Activated B cell treated with CpG ODN at 0.5 μM for 24 hours (primary cell): ENCODE measurements at regions of chr12 and their contacts with region 1.

Region 1: DNA sequence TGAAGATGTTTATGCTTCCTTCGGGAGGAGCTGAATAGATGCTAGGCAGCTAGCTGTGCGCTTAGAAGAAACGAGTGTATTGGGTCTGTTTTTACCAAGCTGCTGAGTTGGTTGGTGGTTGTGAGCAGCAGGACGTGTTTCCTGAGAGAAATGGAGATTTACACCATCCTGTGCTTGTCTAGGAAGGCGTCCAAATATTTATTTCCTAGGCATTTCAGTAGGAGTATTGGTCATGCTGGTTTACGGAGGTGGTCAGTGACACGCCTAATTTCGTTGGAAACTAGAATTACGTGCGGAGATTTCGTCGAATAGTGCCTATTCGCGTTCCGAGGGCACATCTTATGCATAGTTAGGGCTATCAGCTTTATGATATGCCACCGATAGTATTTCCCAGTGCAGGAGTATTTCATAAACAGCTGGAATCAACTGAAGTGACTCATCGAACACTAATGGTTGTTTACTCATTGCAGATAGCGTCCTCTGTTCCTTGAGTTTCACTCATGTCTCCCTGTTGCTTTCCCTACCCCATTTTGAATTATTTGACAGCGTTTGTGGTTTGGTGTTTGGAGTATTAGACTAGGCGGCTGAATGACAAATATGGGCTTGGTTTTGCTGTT is 780 bp downstream of the TBC1D15 start:
- DNase-seq: no peak
- ATAC-seq: peak; percentile 8
- H3K4me3 Mint-ChIP-seq: peak overlapping the region; percentile 94
- H3K27ac Mint-ChIP-seq: peak overlapping the region; percentile 96
- H3K4me1 Mint-ChIP-seq: peaks cover 34% of the 10 kb centered on the region
- H3K27me3 Mint-ChIP-seq: peaks cover 2% of the 10 kb centered on the region
- CTCF ChIP-seq: no peak

Region 2: GRCh38 chr12:71415336-71416231 is 424.8 kb before region 1 on chr12:
- CTCF ChIA-PET with region 1: no interaction called
- POLR2A ChIA-PET with region 1: no interaction called
- intact Hi-C with region 1: loop called (anchors 2 kb)
- DNase-seq: no peak
- ATAC-seq: peak; percentile 54
- H3K4me3 Mint-ChIP-seq: no peak overlapping the region
- H3K27ac Mint-ChIP-seq: no peak overlapping the region
- H3K4me1 Mint-ChIP-seq: no peaks in the 10 kb centered on the region
- H3K27me3 Mint-ChIP-seq: no peaks in the 10 kb centered on the region
- CTCF ChIP-seq: no peak

Region 3: GRCh38 chr12:71636704-71637115 is 203.6 kb before region 1 on chr12:
- CTCF ChIA-PET with region 1: no interaction called
- POLR2A ChIA-PET with region 1: no interaction called
- intact Hi-C with region 1: loop called (anchors 10 kb)
- DNase-seq: no peak
- ATAC-seq: peak; percentile 57
- H3K4me3 Mint-ChIP-seq: no peak overlapping the region
- H3K27ac Mint-ChIP-seq: peak overlapping the region; percentile 19
- H3K4me1 Mint-ChIP-seq: peaks cover 5% of the 10 kb centered on the region
- H3K27me3 Mint-ChIP-seq: no peaks in the 10 kb centered on the region
- CTCF ChIP-seq: peak; percentile 66

Region 4: DNA sequence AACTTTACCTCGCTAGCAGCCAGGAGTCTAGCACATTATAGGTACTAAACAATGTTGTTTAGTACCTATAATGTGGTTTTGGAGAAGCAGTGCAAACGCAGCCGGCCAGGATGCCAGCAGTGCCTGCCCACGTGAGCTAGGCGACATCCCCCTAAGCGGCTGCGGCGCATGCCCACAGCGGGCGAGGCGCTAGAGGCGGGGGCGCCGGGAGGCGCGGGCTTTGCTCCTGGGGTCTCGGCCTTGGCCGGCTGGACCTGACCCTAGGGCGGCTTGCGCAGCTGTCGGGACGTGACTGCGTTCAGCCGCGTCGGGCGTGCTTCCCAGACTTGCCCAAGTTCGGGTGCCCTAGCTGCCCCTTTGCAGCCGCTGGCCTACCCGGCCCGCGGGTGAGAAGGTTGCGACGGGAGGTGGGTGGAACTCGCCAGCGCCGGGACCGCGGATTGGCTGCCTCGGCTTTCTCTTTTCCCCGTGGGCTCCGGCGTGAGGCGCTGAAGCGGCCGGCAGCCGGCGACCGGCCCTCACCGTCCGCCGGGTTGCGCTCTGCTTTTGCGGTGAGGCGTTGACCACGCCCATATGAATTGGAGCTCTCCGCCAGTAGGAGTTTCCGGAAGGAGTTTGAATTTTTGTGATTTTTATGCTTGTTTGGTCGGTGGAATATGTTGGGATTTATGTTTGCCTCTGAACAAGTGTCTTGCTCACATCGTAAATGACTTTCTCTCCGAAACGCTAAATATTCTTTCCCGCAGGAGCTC is 154.2 kb before region 1 on chr12 and contains the start of gene TMEM19:
- CTCF ChIA-PET with region 1: no interaction called
- POLR2A ChIA-PET with region 1: interaction called, 7 read pairs
- intact Hi-C with region 1: loop called (anchors 1 kb)
- DNase-seq: peak; percentile 87
- ATAC-seq: peak; percentile 87
- H3K4me3 Mint-ChIP-seq: peak within 1 kb of the TSS; percentile 93
- H3K27ac Mint-ChIP-seq: peak within 1 kb of the TSS; percentile 97
- H3K4me1 Mint-ChIP-seq: peaks cover 56% of the 10 kb centered on the region
- H3K27me3 Mint-ChIP-seq: no peaks in the 10 kb centered on the region
- CTCF ChIP-seq: no peak
- total RNA-seq, gene TMEM19: 42.6 and 46.7 TPM in 2 replicates

Region 5: DNA sequence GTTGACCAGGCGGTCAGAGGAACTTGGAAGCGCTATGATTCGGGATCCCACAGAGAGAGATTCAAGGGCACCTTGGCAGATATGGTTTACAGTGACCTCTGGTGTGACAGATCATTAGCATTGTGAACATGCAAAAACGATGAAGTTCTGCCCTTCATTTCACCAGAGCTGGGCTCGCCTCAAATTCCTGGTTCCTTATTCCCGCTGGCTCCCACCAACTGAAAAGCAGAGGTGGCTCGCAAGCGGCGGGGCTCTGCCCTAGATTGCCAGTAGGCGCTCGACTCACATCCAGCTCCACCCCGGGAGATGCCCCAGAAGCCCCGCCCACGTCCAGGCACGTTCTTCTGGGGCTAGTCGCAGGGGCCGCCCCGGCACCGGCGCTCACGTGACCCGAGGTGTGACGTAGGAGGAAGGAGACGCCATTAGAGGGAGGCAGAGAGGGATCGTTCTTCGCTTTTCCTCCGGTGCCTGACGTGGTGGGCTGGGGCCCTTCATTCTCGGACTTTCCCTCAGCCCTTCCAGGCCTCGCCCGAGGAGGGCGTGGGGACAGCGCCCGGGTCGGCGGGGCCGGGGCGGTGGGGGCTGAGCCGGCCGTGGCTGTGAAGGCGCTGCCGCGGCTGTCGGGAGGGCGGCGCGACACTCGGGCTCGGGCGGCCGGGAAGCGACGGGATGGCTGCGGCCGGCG is 85.7 kb before region 1 on chr12 and contains the start of gene RAB21:
- CTCF ChIA-PET with region 1: interaction called, 3 read pairs
- POLR2A ChIA-PET with region 1: interaction called, 17 read pairs
- intact Hi-C with region 1: loop called (anchors 1 kb)
- DNase-seq: peak; percentile 95
- ATAC-seq: peak; percentile 84
- H3K4me3 Mint-ChIP-seq: peak within 1 kb of the TSS; percentile 96
- H3K27ac Mint-ChIP-seq: peak within 1 kb of the TSS; percentile 97
- H3K4me1 Mint-ChIP-seq: peaks cover 43% of the 10 kb centered on the region
- H3K27me3 Mint-ChIP-seq: no peaks in the 10 kb centered on the region
- CTCF ChIP-seq: no peak
- total RNA-seq, gene RAB21: 112 and 121 TPM in 2 replicates

Region 6: DNA sequence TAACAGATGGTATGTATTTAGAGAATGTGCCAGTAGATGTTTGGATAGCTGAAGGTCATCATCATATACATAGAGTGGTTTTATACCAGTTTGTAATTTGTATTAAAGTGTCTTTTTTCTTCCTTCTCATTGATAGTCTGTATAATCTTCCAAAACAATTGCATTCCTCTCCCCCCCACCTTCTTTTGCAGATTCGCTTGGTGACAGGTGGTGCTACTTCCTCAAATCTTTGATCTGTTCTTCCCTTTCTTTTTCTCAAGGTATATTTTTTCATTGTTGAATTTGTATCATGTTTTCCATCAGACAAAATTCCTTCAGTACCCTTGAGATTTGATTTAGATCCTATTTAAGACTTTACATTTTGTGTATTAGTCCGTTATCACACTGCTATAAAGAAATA is 14.3 kb after region 1 on chr12:
- CTCF ChIA-PET with region 1: interaction called, 3 read pairs
- POLR2A ChIA-PET with region 1: no interaction called
- intact Hi-C with region 1: loop called (anchors 1 kb)
- DNase-seq: no peak
- ATAC-seq: no peak
- H3K4me3 Mint-ChIP-seq: no peak overlapping the region
- H3K27ac Mint-ChIP-seq: peak overlapping the region; percentile 72
- H3K4me1 Mint-ChIP-seq: peaks cover 34% of the 10 kb centered on the region
- H3K27me3 Mint-ChIP-seq: no peaks in the 10 kb centered on the region
- CTCF ChIP-seq: no peak

Region 7: GRCh38 chr12:72432037-72432604 is 591.8 kb after region 1 on chr12:
- CTCF ChIA-PET with region 1: no interaction called
- POLR2A ChIA-PET with region 1: no interaction called
- intact Hi-C with region 1: no loop called
- DNase-seq: no peak
- ATAC-seq: no peak
- H3K4me3 Mint-ChIP-seq: no peak overlapping the region
- H3K27ac Mint-ChIP-seq: no peak overlapping the region
- H3K4me1 Mint-ChIP-seq: no peaks in the 10 kb centered on the region
- H3K27me3 Mint-ChIP-seq: no peaks in the 10 kb centered on the region
- CTCF ChIP-seq: no peak